AG04450 (cell line): ENCODE measurements at regions of chr18 and their contacts with region 1.

Region 1: GRCh38 chr18:75183531-75183930 is 25.4 kb downstream of the PTGR3 start:
- DNase-seq: no peak
- H3K4me3 ChIP-seq: no peak overlapping the region
- H3K27ac ChIP-seq: no peak overlapping the region
- H3K27me3 ChIP-seq: peaks cover 4% of the 10 kb centered on the region
- CTCF ChIP-seq: no peak

Region 2: DNA sequence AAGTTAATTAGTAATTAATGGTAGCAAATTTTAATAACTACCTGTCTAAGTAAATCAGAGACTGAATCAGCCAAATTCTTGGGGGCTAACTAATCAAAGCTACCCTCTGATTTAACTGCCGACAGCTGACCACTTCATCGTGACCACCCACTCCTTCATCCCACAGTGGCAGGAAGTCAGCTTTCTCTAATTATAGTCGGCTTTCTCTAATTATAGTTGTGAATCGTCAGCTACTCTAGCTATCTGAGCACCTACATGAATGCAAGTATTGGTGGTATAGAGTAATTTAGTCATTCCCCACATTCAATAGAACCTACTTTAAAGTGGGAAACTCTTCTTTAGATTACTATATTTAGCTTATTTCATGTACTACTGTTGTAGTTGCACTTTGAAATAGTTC is 160.1 kb before region 1 on chr18:
- CTCF ChIA-PET with region 1: no interaction called
- POLR2A ChIA-PET with region 1: no interaction called
- DNase-seq: no peak
- H3K4me3 ChIP-seq: no peak overlapping the region
- H3K27ac ChIP-seq: no peak overlapping the region
- H3K27me3 ChIP-seq: no peaks in the 10 kb centered on the region
- CTCF ChIP-seq: no peak

Region 3: GRCh38 chr18:76265497-76266235 is 1082.1 kb after region 1 on chr18:
- CTCF ChIA-PET with region 1: no interaction called
- POLR2A ChIA-PET with region 1: interaction called, 10 read pairs
- DNase-seq: peak; percentile 7
- H3K4me3 ChIP-seq: peak overlapping the region; percentile 36
- H3K27ac ChIP-seq: no peak overlapping the region
- H3K27me3 ChIP-seq: peaks cover 3% of the 10 kb centered on the region
- CTCF ChIP-seq: no peak